ENCODE measurements at regions of chr3 and their contacts with region 1.

Region 1: GRCh38 chr3:151282921-151283320 is 4.6 kb upstream of the P2RY14 start:
- DNase-seq: peak; percentile 50
- CTCF ChIP-seq: peak; percentile 50

Region 2: DNA sequence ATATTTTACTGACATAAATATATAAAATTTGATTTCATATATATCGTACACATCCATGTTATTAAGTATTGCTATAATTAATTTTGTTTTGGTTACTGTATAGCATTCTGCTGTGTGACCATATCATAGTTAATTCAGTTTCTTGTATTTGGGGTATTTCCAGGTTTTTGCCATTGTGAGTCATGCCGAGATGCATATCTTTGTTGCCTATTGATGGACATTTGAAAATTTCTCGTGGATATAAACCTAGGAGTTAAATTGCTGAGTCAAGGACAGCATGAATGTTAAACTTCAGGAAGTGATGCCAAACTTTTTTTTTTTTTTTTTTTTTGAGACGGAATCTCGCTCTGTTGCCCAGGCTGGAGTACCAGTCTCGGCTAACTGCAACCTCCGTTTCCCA is 46.2 kb before region 1 on chr3:
- CTCF ChIA-PET with region 1: interaction called, 13 read pairs
- POLR2A ChIA-PET with region 1: no interaction called
- DNase-seq: no peak
- CTCF ChIP-seq: no peak

Region 3: DNA sequence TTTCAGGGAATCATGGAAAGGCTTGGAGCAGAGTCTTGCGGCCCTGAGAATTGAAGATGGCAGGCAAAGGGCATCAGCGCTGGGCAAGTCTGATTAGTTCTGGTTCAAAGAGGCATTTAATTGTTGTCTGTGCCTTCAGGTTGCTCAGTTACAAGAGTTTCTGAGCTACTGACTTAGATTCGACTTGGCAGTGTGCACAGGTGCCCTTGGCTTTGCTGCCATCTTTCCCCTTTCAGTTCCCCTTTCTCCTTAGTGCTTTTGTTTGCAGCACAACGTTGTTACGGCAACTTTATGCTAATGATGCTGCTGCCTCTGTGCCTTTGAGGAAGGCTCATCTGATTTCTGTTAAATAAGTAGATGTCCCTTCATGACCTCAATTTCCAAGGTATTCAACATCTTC is 17.1 kb before region 1 on chr3:
- CTCF ChIA-PET with region 1: interaction called, 24 read pairs
- POLR2A ChIA-PET with region 1: no interaction called
- DNase-seq: peak; percentile 36
- CTCF ChIP-seq: no peak

Region 4: GRCh38 chr3:151395806-151396205 is 112.9 kb after region 1 on chr3:
- CTCF ChIA-PET with region 1: no interaction called
- POLR2A ChIA-PET with region 1: no interaction called
- DNase-seq: no peak
- CTCF ChIP-seq: no peak

Measured in GM10248 (cell line).